Kidney (tissue), 22 donors: ENCODE measurements at regions of chr5 and their contacts with region 1.

Region 1: GRCh38 chr5:158174918-158175851 is 316.2 kb upstream of the CLINT1 start:
- DNase-seq: peak in 4 of 5 donors; percentile 80 to 95 (median 91)
- H3K4me3 ChIP-seq: no peak overlapping the region
- H3K27ac ChIP-seq: no peak overlapping the region
- H3K4me1 ChIP-seq: peaks cover 0 to 3% (median 0%) of the 10 kb centered on the region in 3 donors
- H3K27me3 ChIP-seq: no peaks in the 10 kb centered on the region
- CTCF ChIP-seq: peak; percentile 93

Region 2: DNA sequence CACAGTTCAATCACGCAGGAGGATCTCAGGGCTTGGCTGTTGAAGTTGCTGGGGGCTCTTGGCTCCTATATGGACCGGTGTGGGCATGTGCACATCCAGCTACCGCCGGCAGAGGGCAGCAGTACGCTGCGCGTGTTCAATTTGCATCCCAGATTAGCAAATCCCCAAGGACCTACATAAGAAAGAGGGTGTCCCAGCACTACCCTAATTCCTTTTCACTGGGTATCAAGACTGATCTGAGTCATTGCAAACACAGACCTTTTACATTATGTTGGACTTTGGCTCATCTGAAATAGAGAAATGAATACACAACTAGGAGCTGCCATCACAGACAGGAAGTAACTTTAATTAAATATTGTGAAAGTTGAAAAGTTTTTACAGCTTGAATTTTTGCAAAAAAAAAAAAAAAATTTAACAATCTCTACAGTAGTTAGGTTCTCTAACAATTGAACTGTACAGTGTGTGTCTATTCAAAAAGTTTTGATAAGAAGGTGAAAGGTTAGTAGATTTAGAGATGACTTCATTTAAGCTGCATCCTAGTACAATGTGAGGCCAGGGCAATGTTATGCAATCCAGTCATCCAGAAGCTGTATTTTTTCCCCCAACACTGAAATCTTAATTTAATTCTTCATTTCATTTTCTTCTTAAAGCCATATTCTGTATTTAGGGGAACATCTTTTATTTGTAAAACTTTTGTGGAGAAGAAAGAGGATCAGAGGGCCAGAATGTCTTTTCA is 520.6 kb after region 1 on chr5:
- intact Hi-C with region 1: loop called (anchors 10 kb)
- DNase-seq: peak; percentile 77 to 80 (median 78)
- H3K4me3 ChIP-seq: no peak overlapping the region
- H3K27ac ChIP-seq: no peak overlapping the region
- H3K4me1 ChIP-seq: peaks cover 0 to 3% (median 0%) of the 10 kb centered on the region in 3 donors
- H3K27me3 ChIP-seq: peaks cover 2% of the 10 kb centered on the region
- CTCF ChIP-seq: peak; percentile 92

Region 3: DNA sequence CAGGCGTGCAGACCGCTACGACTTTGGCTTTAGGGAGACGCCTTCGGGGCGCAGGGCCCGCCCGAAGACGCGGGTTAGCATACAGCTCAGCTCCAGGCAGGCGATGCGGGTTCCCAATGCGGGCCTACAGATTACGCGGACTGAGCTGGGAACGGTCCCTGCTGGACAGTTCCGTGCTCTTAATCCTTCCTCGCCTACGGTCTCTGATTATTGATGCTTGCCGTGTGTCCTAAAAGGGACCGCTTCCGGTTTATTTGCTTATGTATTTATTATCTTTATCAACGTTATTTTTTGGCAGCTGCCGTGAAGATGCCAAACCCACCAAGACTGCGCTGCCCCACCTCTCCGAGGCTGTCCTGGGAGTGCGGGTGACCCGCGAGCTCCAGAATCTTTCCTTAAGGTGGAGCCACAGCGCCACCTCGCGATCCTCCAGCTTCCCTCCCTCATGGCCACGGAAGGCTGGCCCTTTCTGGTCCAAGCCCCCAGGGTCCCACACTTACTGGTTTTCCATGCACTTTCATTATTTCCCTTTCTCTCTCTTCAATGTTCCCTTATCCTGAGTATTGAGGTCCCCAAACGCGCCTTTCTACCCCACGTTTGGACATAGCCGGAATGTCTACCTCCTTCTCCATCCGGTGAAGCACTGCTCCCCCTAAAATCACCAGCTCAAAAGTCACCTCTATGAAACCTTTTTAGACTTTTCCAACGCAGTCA is 931.5 kb after region 1 on chr5:
- intact Hi-C with region 1: loop called (anchors 2 kb)
- DNase-seq: peak; percentile 84 to 91 (median 88)
- H3K4me3 ChIP-seq: peak overlapping the region; percentile 0 to 47 (median 41)
- H3K27ac ChIP-seq: no peak overlapping the region
- H3K4me1 ChIP-seq: peaks cover 0 to 7% (median 0%) of the 10 kb centered on the region in 3 donors
- H3K27me3 ChIP-seq: peaks cover 12% of the 10 kb centered on the region
- CTCF ChIP-seq: peak; percentile 81